ENCODE measurements at regions of chrX and their contacts with region 1.

Region 1: GRCh38 chrX:149962859-149963757 is 24.8 kb upstream of the EOLA2 start:
- DNase-seq: peak; percentile 20
- CTCF ChIP-seq: peak; percentile 79

Region 2: GRCh38 chrX:150587585-150588503 is 624.7 kb after region 1 on chrX:
- in situ Hi-C with region 1: loop called (anchors 25 kb)
- DNase-seq: no peak
- CTCF ChIP-seq: peak; percentile 74

Region 3: DNA sequence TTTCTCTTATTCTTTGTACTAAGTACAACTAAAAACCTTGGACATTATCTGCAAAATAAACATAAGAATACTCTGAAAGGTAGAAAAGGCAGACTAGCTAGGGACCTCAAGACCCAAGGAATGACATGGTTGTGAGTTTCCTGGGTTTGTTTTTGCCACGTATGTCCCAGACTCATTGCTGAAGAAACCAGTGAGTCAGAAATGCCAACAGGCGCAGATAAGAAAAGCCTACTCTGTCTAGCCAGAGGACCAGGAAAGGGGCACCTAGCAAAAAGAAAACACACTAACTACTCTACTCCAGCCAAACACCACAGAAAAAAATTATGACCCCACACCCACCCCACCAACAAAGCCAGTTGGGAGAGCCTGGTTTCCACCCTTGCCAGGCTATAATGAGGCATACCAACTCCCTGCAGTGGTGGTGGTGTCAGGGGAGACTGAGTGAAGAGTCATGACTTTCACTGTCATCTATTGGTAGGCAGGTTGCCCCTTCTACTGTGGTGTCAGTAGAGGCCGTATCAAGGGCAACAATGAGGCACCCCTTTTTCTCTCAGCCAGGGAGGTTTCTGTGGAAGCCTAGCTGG is 741.0 kb after region 1 on chrX:
- in situ Hi-C with region 1: loop called (anchors 25 kb)
- DNase-seq: no peak
- CTCF ChIP-seq: no peak

Measured in GM13977 (cell line).